ENCODE measurements at regions of chr1 and their contacts with region 1.

Region 1: GRCh38 chr1:187621951-187622350 is 793.2 kb downstream of the PLA2G4A start:
- DNase-seq: no peak
- H3K4me3 Mint-ChIP-seq: no peak overlapping the region
- H3K27ac Mint-ChIP-seq: no peak overlapping the region
- H3K4me1 Mint-ChIP-seq: peaks cover 19% of the 10 kb centered on the region
- H3K27me3 Mint-ChIP-seq: no peaks in the 10 kb centered on the region
- CTCF ChIP-seq: no peak

Region 2: DNA sequence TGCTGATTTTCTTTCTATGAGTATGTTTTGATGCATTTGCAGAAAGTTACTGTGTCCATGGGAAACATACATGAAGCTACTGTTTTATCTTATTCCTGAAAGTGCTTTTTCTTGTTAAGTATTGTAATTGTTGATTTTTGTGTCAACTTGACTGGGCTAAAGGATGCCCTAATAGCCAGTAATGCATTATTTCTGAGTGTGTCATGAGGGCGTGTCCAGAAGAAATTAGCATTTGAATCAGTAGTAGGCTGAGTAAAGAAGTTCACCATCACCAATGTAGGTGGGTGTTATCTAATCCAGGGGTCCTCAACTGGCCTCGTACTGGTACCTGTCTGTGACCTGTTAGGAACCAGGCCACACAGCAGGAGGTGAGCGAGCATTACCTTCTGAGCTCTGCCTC is 33.0 kb before region 1 on chr1:
- CTCF ChIA-PET with region 1: no interaction called
- POLR2A ChIA-PET with region 1: no interaction called
- intact Hi-C with region 1: loop called (anchors 1 kb)
- DNase-seq: no peak
- H3K4me3 Mint-ChIP-seq: no peak overlapping the region
- H3K27ac Mint-ChIP-seq: no peak overlapping the region
- H3K4me1 Mint-ChIP-seq: no peaks in the 10 kb centered on the region
- H3K27me3 Mint-ChIP-seq: no peaks in the 10 kb centered on the region
- CTCF ChIP-seq: no peak

Region 3: DNA sequence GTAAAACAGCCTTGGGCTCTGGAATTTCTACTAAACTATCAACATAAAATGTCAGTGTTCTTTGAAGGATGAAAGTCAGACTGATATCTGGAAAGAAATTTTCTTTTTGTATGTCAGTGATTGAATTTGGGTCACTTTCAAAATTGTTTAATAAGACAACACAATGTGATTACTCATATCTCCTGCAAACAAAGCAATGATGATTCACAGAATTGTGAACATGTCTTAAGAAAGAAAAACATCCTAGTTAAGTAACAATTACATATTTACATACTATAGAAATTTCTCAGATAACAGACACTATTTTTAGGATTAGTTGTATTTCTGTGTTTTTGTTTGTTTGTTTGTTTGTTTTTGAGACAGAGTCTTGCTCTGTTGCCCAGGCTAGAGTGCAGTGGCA is 33.2 kb after region 1 on chr1:
- CTCF ChIA-PET with region 1: no interaction called
- POLR2A ChIA-PET with region 1: no interaction called
- intact Hi-C with region 1: no loop called
- DNase-seq: peak; percentile 64
- H3K4me3 Mint-ChIP-seq: no peak overlapping the region
- H3K27ac Mint-ChIP-seq: no peak overlapping the region
- H3K4me1 Mint-ChIP-seq: peaks cover 8% of the 10 kb centered on the region
- H3K27me3 Mint-ChIP-seq: no peaks in the 10 kb centered on the region
- CTCF ChIP-seq: no peak